ENCODE measurements at regions of chr1 and their contacts with region 1.

Region 1: DNA sequence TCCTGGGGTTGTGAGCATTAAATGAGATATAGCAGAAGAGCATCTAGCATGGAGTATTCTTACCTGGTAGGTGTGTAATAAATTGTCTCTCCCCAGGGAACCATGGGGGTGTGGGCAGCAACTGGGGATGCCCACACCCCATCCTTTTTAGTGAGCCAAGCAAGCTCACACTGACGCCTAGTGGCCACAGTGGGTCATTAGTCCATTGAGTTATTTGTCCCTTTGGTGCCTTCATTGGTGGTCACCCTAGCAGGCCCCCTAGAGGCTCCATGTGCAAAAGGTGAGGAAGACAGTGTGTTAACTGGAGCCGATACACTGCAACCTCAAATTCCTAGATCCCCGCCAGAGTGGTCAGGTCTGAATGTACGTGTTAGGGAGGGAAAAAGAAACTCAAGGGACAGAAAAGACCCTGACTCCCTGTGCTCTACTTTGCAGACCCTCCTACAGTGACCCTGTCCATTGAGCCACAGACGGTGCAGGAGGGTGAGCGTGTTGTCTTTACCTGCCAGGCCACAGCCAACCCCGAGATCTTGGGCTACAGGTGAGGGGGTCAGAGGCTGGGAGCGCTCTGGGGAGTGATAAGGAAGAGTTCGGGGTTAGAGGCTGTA is 93.3 kb upstream of the CD1D start:
- DNase-seq: peak; percentile 83
- H3K4me3 ChIP-seq: no peak overlapping the region
- H3K27ac ChIP-seq: no peak overlapping the region
- H3K4me1 ChIP-seq: no peaks in the 10 kb centered on the region
- H3K27me3 ChIP-seq: no peaks in the 10 kb centered on the region
- CTCF ChIP-seq: peak; percentile 96 to 99
- POLR2A ChIP-seq: no peak

Region 2: DNA sequence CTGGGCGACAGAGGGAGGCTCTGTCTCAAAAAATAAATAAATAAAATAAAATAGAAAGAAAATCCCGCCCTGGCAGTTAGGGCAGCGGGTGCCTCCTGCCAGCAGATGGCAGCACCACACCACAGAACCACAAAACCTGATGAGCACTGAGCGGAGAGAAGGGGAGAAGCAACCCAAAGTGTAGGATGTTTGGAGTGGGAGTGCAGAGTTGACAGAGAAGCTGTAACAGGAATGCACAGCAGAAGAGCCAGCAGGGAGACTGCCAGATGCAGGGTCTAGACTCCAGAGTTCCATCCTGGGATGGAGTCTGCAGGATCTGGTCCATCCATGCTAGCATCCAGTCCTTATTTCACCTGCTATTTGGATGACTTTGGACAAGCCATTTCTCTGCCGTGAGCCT is 123.7 kb before region 1 on chr1:
- CTCF ChIA-PET with region 1: interaction called, 28 read pairs
- POLR2A ChIA-PET with region 1: no interaction called
- dilution Hi-C with region 1: no loop called
- intact Hi-C with region 1: loop called (anchors 1 kb)
- DNase-seq: peak; percentile 63
- H3K4me3 ChIP-seq: no peak overlapping the region
- H3K27ac ChIP-seq: no peak overlapping the region
- H3K4me1 ChIP-seq: peaks cover 7% of the 10 kb centered on the region
- H3K27me3 ChIP-seq: peaks cover 10 to 18% of the 10 kb centered on the region in 2 experiments
- CTCF ChIP-seq: peak; percentile 76 to 78
- POLR2A ChIP-seq: no peak

Region 3: GRCh38 chr1:157969697-157970485 is 117.5 kb before region 1 on chr1:
- CTCF ChIA-PET with region 1: interaction called, 28 read pairs
- POLR2A ChIA-PET with region 1: no interaction called
- dilution Hi-C with region 1: no loop called
- intact Hi-C with region 1: loop called (anchors 1 kb)
- DNase-seq: peak; percentile 90
- H3K4me3 ChIP-seq: no peak overlapping the region
- H3K27ac ChIP-seq: peak overlapping the region; percentile 10
- H3K4me1 ChIP-seq: peaks cover 17% of the 10 kb centered on the region
- H3K27me3 ChIP-seq: peaks cover 2 to 4% of the 10 kb centered on the region in 2 experiments
- CTCF ChIP-seq: peak; percentile 75 to 90
- POLR2A ChIP-seq: no peak

Region 4: GRCh38 chr1:158055854-158056253 is 31.6 kb before region 1 on chr1:
- CTCF ChIA-PET with region 1: interaction called, 6 read pairs
- POLR2A ChIA-PET with region 1: no interaction called
- dilution Hi-C with region 1: no loop called
- intact Hi-C with region 1: loop called (anchors 1 kb)
- DNase-seq: peak; percentile 85
- H3K4me3 ChIP-seq: no peak overlapping the region
- H3K27ac ChIP-seq: no peak overlapping the region
- H3K4me1 ChIP-seq: peaks cover 19% of the 10 kb centered on the region
- H3K27me3 ChIP-seq: no peaks in the 10 kb centered on the region
- CTCF ChIP-seq: no peak
- POLR2A ChIP-seq: no peak